GM13977 (cell line): ENCODE measurements at regions of chr3 and their contacts with region 1.

Region 1: DNA sequence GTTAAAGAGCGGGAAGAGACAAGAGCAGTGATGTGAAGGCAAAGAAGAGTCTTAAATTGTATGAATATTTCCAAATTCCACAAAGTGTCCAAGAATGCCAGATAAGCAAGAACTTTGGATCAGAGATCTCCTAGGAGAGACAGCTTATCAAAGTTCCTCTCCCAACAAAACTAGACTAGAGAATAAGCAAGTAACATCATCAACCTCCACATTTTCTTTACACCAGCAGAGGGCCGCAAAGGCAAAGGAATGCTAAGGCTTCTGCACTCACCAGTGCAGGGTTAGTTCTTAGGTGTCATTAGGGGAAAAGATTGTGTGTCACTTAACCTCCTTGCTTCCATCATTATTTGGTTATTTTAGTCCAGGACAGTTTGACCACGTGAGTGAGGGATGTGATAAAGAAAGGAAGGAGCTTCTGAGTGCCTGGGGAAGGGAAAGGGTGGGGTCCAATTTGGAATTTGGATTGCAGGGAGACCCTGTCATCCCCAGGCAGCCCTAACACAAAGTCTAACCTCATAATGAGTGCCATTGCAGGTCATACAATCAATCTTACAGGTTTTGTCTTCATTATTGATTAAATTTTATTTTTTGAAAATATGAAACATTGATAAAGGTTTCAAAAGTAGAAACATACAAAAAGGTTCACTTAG is 7.5 kb upstream of the CMTM6 start:
- DNase-seq: peak; percentile 75
- CTCF ChIP-seq: peak; percentile 84

Region 2: DNA sequence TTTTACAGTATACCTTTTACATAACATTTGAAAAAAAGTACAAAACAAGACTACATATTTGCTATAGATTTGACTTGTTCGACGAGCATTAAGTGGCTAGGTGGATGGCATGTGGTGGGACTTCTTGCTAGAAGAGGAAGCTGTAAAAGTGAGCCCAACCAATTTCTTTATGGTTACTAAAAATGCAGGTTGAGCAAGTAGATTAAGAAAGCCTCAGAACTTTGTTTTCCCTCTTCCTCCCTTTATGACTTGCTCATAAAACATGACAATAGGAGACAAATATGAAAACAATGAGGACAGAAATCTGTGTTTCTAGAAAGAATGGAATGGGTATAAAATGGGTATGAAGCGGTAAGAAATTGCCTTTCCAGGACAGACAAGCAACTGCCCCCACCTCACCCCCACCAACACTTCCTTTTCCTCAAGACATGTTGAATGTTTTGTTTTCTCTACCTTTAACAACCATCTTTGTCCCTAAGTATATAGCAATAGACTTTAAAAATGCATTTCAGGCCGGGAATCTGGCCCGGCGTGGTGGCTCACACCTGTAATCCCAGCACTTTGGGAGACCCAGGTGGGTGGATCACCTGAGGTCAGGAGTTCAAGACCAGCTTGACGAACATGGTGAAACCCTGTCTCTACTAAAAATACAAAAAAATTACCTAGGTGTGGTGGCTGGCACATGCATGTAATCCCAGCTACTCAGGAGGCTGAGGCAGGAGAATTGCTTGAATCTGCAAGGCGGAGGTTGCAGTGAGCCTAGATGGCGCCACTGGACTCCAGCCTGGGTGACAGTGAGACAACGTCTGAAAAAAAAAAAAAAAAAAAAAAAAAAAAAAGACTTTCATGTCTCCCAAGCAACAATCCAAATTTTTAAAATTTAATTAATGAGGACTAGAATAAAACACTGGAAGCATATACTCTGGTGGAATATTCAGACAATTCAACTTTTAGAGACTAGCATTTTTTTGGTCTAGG is 391.5 kb after region 1 on chr3:
- in situ Hi-C with region 1: loop called (anchors 25 kb)
- DNase-seq: no peak
- CTCF ChIP-seq: peak; percentile 49